AG04450 (cell line): ENCODE measurements at regions of chr2 and their contacts with region 1.

Region 1: DNA sequence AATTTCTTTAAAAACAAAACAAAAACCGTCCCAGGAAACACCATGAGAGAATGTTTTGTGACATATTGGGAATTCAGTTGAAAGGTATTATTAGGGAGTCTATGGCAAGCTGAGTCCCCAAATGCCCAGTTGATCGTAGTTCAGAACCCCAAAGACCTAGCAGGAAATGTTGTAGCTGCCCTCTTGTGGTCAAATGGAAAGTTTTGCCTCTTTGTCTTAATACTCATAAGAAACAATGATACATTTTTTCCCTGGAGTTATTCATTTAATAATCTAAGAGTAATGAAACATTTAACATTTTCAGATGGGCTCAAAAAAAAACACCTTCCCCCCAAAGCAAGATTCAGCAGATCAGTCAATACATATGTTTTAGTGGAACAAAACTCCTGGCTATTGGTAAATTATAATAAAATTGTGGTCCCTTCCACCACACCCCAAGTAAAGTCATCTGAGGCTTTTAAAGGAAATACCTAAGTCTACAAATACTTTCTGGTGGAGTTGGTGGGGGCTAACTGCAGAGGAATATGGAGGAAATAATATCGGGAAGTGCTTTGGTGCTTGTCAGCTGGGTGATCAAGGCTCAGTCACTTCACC is 37.8 kb upstream of the EFEMP1 start:
- DNase-seq: peak; percentile 21
- H3K4me3 ChIP-seq: no peak overlapping the region
- H3K27ac ChIP-seq: no peak overlapping the region
- H3K27me3 ChIP-seq: no peaks in the 10 kb centered on the region
- CTCF ChIP-seq: peak; percentile 73

Region 2: GRCh38 chr2:55771612-55772011 is 189.8 kb before region 1 on chr2:
- CTCF ChIA-PET with region 1: interaction called, 170 read pairs
- POLR2A ChIA-PET with region 1: no interaction called
- DNase-seq: no peak
- H3K4me3 ChIP-seq: no peak overlapping the region
- H3K27ac ChIP-seq: no peak overlapping the region
- H3K27me3 ChIP-seq: no peaks in the 10 kb centered on the region
- CTCF ChIP-seq: peak; percentile 77

Region 3: GRCh38 chr2:55857766-55858165 is 103.6 kb before region 1 on chr2:
- CTCF ChIA-PET with region 1: interaction called, 11 read pairs
- POLR2A ChIA-PET with region 1: interaction called, 4 read pairs
- DNase-seq: no peak
- H3K4me3 ChIP-seq: no peak overlapping the region
- H3K27ac ChIP-seq: no peak overlapping the region
- H3K27me3 ChIP-seq: no peaks in the 10 kb centered on the region
- CTCF ChIP-seq: no peak

Region 4: DNA sequence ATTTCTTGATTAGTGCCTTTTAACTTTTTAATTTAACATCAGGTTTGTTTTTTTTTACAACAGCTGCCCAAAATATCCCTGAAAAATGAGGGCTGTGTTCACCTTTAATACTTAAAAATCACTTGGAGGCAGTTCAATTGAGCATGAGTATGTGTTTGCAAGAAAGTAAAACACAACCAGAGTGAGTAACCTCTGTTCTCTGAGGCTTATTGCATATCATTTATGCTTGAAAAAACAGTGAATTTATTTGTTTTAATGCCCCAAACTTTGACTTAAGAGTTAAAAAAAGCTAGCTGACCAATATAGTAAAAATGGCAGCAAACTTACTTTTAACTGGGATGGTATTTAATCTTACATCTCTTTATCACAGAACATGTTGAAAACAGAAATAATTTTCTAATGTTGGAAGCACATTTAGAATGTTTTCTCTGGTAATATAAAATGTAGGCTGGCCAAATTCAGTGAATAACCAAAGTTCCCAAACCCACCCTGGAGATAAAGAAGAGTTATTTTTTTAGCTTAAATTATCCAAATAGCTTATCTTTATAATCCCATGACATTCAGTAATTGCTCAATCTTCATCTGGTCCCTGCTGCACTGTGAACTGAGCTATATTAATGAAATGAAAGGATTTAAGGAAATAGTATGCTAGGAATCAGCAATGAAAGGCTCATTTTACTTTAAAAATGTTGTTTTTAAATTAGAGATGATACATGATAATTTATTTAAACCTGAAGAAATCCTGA is 13.1 kb before region 1 on chr2:
- CTCF ChIA-PET with region 1: interaction called, 30 read pairs
- POLR2A ChIA-PET with region 1: no interaction called
- DNase-seq: no peak
- H3K4me3 ChIP-seq: no peak overlapping the region
- H3K27ac ChIP-seq: no peak overlapping the region
- H3K27me3 ChIP-seq: no peaks in the 10 kb centered on the region
- CTCF ChIP-seq: no peak

Region 5: DNA sequence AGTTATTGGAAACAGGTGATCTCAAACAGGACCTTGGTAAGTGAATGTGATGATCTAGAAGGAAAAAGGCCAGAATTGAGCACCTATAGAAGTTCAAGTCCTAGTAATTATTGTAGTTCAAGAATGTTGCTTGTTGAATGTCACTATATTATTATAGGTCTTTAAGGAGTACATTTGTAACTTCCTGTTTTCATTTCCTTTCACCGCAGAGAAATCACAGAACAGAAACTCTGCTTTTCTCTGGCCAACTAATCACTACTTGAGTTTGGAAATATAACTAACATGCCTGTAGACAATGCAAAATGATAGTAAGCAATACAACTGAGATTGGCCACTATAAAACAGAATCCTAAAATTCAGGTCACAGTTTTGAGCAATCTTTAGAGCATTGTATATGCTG is 24.0 kb after region 1 on chr2:
- CTCF ChIA-PET with region 1: interaction called, 24 read pairs
- POLR2A ChIA-PET with region 1: no interaction called
- DNase-seq: no peak
- H3K4me3 ChIP-seq: no peak overlapping the region
- H3K27ac ChIP-seq: no peak overlapping the region
- H3K27me3 ChIP-seq: no peaks in the 10 kb centered on the region
- CTCF ChIP-seq: no peak